ENCODE measurements at regions of chr10 and their contacts with region 1.

Region 1: GRCh38 chr10:3785257-3785850 is 345 bp upstream of the KLF6 start:
- DNase-seq: peak; percentile 99 to 100
- H3K4me3 ChIP-seq: peak overlapping the region; percentile 96
- H3K4me3 Mint-ChIP-seq: peak overlapping the region; percentile 91
- H3K27ac Mint-ChIP-seq: peak overlapping the region; percentile 98
- H3K4me1 ChIP-seq: peaks cover 47% of the 10 kb centered on the region
- H3K4me1 Mint-ChIP-seq: peaks cover 35% of the 10 kb centered on the region
- H3K27me3 ChIP-seq: no peaks in the 10 kb centered on the region
- H3K27me3 Mint-ChIP-seq: no peaks in the 10 kb centered on the region
- CTCF ChIP-seq: no peak

Region 2: GRCh38 chr10:3482200-3483138 is 302.9 kb before region 1 on chr10:
- CTCF ChIA-PET with region 1: no interaction called
- POLR2A ChIA-PET with region 1: no interaction called
- intact Hi-C with region 1: loop called (anchors 10 kb)
- DNase-seq: peak; percentile 87 to 89
- H3K4me3 ChIP-seq: no peak overlapping the region
- H3K4me3 Mint-ChIP-seq: peak overlapping the region; percentile 64
- H3K27ac Mint-ChIP-seq: peak overlapping the region; percentile 90
- H3K4me1 ChIP-seq: peaks cover 35% of the 10 kb centered on the region
- H3K4me1 Mint-ChIP-seq: peaks cover 38% of the 10 kb centered on the region
- H3K27me3 ChIP-seq: no peaks in the 10 kb centered on the region
- H3K27me3 Mint-ChIP-seq: no peaks in the 10 kb centered on the region
- CTCF ChIP-seq: no peak

Region 3: GRCh38 chr10:3749600-3749999 is 35.8 kb before region 1 on chr10:
- CTCF ChIA-PET with region 1: no interaction called
- POLR2A ChIA-PET with region 1: interaction called, 12 read pairs
- intact Hi-C with region 1: no loop called
- DNase-seq: peak in 1 of 2 experiments; percentile 49
- H3K4me3 ChIP-seq: no peak overlapping the region
- H3K4me3 Mint-ChIP-seq: no peak overlapping the region
- H3K27ac Mint-ChIP-seq: no peak overlapping the region
- H3K4me1 ChIP-seq: peaks cover 34% of the 10 kb centered on the region
- H3K4me1 Mint-ChIP-seq: peaks cover 44% of the 10 kb centered on the region
- H3K27me3 ChIP-seq: no peaks in the 10 kb centered on the region
- H3K27me3 Mint-ChIP-seq: no peaks in the 10 kb centered on the region
- CTCF ChIP-seq: no peak

Region 4: GRCh38 chr10:3805791-3806461 is 20.6 kb after region 1 on chr10:
- CTCF ChIA-PET with region 1: interaction called, 10 read pairs
- POLR2A ChIA-PET with region 1: interaction called, 109 read pairs
- intact Hi-C with region 1: loop called (anchors 1 kb)
- DNase-seq: peak; percentile 68 to 80
- H3K4me3 ChIP-seq: no peak overlapping the region
- H3K4me3 Mint-ChIP-seq: peak overlapping the region; percentile 58
- H3K27ac Mint-ChIP-seq: peak overlapping the region; percentile 84
- H3K4me1 ChIP-seq: peaks cover 80% of the 10 kb centered on the region
- H3K4me1 Mint-ChIP-seq: peaks cover 36% of the 10 kb centered on the region
- H3K27me3 ChIP-seq: no peaks in the 10 kb centered on the region
- H3K27me3 Mint-ChIP-seq: no peaks in the 10 kb centered on the region
- CTCF ChIP-seq: no peak

Region 5: GRCh38 chr10:3852147-3852904 is 67.0 kb after region 1 on chr10:
- CTCF ChIA-PET with region 1: interaction called, 8 read pairs
- POLR2A ChIA-PET with region 1: interaction called, 96 read pairs
- intact Hi-C with region 1: loop called (anchors 1 kb)
- DNase-seq: peak; percentile 92 to 95
- H3K4me3 ChIP-seq: no peak overlapping the region
- H3K4me3 Mint-ChIP-seq: peak overlapping the region; percentile 67
- H3K27ac Mint-ChIP-seq: peak overlapping the region; percentile 98
- H3K4me1 ChIP-seq: peaks cover 51% of the 10 kb centered on the region
- H3K4me1 Mint-ChIP-seq: peaks cover 54% of the 10 kb centered on the region
- H3K27me3 ChIP-seq: no peaks in the 10 kb centered on the region
- H3K27me3 Mint-ChIP-seq: no peaks in the 10 kb centered on the region
- CTCF ChIP-seq: no peak

Measured in Caco-2 (cell line).